Activated CD4-positive, alpha-beta T cell treated with anti-CD3 and anti-CD28 coated beads for 36 hours (primary cell): ENCODE measurements at regions of chr20 and their contacts with region 1.

Region 1: DNA sequence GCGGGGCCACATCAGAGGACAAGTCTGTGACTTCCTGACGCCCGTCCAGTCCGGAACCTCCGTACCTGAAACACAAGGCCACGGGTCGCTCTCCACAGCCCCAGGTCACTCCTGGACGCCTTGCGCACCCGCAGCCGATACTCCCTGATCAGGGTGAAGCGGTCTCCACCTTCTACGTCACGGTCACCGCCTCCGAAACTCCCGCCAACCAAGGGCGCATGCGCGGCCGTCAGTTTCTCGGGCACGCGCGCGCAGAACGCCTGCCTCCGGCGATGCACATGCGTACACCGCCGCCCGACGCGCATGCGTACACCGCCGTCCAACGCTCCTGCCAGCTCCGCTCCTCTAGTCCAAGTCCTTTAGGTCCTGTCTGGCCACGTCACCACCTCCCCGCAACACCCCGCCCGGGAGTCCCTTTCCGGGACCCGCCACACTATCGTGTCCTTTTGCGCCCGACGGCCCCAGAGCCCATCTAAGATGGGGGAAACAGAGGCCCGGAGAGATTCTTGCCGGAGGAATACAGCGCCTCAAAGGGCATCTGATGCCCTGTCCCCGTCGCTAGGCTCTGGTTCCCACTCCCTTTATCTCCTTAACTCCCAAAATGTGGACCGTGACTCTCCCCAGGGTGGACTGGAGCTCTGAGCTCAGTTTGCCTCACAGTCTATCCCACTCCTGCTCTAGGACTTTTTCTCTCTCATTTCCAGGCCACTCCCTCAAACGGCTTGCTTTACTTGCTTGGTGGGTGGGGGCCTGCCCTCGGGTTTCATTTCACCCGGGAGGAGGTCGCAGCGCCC is at the start of gene DSN1:
- DNase-seq: peak; percentile 99
- ATAC-seq: peak; percentile 91
- H3K4me3 Mint-ChIP-seq: peak within 1 kb of the TSS; percentile 79
- H3K27ac Mint-ChIP-seq: peak within 1 kb of the TSS; percentile 97
- H3K4me1 Mint-ChIP-seq: peaks cover 13% of the 10 kb centered on the region
- H3K27me3 Mint-ChIP-seq: no peaks in the 10 kb centered on the region
- total RNA-seq, gene DSN1: 20.4 to 20.7 TPM

Region 2: DNA sequence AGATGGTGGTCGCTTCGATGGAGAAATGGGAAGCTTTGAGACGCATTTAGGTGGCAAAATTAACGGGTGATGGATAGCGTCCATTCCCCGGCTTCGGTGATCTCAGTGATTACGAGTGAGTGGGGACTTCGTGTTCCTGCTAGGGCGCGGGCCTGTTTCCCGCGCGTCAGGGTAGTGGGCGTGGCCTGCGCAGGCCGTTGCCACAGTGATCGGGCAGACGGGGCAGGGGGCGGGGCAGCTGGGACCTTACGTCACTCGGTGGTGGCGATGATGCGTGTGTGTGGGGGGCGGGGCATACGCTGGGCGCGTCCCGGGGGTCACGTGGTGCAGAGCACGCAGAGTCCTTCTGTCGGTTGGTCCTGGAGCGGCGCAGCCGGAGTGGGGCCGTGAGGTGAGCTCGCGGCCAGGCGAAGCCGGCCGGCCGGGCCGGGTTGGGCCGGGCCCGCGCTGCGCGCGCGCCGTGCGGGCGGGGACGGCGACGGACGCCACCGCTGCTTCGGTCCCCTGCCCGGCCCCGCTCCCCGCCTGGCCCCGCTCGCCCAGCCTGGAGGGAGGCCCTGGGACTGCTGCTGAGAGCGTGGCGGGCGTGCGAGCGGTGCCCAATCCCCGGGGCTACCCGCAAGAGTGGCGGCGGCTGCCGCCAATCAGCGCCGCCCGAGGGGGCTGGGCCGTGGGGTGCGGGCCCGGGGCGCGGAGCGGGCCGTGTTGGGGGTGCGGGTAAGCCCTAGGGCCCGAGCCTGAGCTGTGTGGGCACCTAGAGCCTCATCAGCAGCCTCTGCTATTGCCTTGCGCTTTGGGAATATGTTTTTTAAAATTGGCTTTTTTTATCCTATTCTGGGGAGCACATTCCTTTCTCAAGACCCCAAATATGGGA is 1001.9 kb before region 1 on chr20 and contains the start of gene PHF20:
- CTCF ChIA-PET with region 1: no interaction called
- POLR2A ChIA-PET with region 1: no interaction called
- intact Hi-C with region 1: loop called in 1 of 2 experiments (anchors 10 kb)
- DNase-seq: peak; percentile 100
- ATAC-seq: peak; percentile 91
- H3K4me3 Mint-ChIP-seq: peak within 1 kb of the TSS; percentile 81
- H3K27ac Mint-ChIP-seq: peak within 1 kb of the TSS; percentile 94
- H3K4me1 Mint-ChIP-seq: peaks cover 76% of the 10 kb centered on the region
- H3K27me3 Mint-ChIP-seq: no peaks in the 10 kb centered on the region
- total RNA-seq, gene PHF20: 54.3 to 61.6 TPM

Region 3: GRCh38 chr20:36605399-36606157 is 168.2 kb before region 1 on chr20 and contains the start of gene RAB5IF:
- CTCF ChIA-PET with region 1: no interaction called
- POLR2A ChIA-PET with region 1: interaction called, 3 read pairs
- intact Hi-C with region 1: loop called in 1 of 2 experiments (anchors 1 kb)
- DNase-seq: peak; percentile 100
- ATAC-seq: peak; percentile 91
- H3K4me3 Mint-ChIP-seq: peak within 1 kb of the TSS; percentile 100
- H3K27ac Mint-ChIP-seq: peak within 1 kb of the TSS; percentile 96
- H3K4me1 Mint-ChIP-seq: peaks cover 17% of the 10 kb centered on the region
- H3K27me3 Mint-ChIP-seq: no peaks in the 10 kb centered on the region
- total RNA-seq, gene RAB5IF: 71.7 to 90.2 TPM

Region 4: GRCh38 chr20:36745927-36746659 is 27.7 kb before region 1 on chr20 and contains the start of gene NDRG3:
- CTCF ChIA-PET with region 1: interaction called, 4 read pairs
- POLR2A ChIA-PET with region 1: no interaction called
- intact Hi-C with region 1: loop called (anchors 1 kb)
- DNase-seq: peak; percentile 96
- ATAC-seq: peak; percentile 99
- H3K4me3 Mint-ChIP-seq: peak within 1 kb of the TSS; percentile 81
- H3K27ac Mint-ChIP-seq: peak within 1 kb of the TSS; percentile 87
- H3K4me1 Mint-ChIP-seq: peaks cover 20% of the 10 kb centered on the region
- H3K27me3 Mint-ChIP-seq: no peaks in the 10 kb centered on the region
- total RNA-seq, gene NDRG3: 24.8 to 27.5 TPM

Region 5: GRCh38 chr20:36886859-36887751 is 113.3 kb after region 1 on chr20:
- CTCF ChIA-PET with region 1: no interaction called
- POLR2A ChIA-PET with region 1: no interaction called
- intact Hi-C with region 1: loop called in 1 of 2 experiments (anchors 5 kb)
- DNase-seq: peak; percentile 92
- ATAC-seq: peak; percentile 97
- H3K4me3 Mint-ChIP-seq: no peak overlapping the region
- H3K27ac Mint-ChIP-seq: peak overlapping the region; percentile 9
- H3K4me1 Mint-ChIP-seq: peaks cover 14% of the 10 kb centered on the region
- H3K27me3 Mint-ChIP-seq: no peaks in the 10 kb centered on the region

Region 6: GRCh38 chr20:37220731-37221130 is 446.9 kb after region 1 on chr20:
- CTCF ChIA-PET with region 1: no interaction called
- POLR2A ChIA-PET with region 1: no interaction called
- intact Hi-C with region 1: no loop called
- DNase-seq: no peak
- ATAC-seq: no peak
- H3K4me3 Mint-ChIP-seq: no peak overlapping the region
- H3K27ac Mint-ChIP-seq: no peak overlapping the region
- H3K4me1 Mint-ChIP-seq: no peaks in the 10 kb centered on the region
- H3K27me3 Mint-ChIP-seq: no peaks in the 10 kb centered on the region